T-cell (primary cell): ENCODE measurements at regions of chr7 and their contacts with region 1.

Region 1: GRCh38 chr7:76216381-76217082 is 14.8 kb downstream of the SRRM3 start:
- DNase-seq: no peak
- ATAC-seq: no peak
- H3K4me3 ChIP-seq: no peak overlapping the region
- H3K4me3 Mint-ChIP-seq: no peak overlapping the region
- H3K27ac ChIP-seq: no peak overlapping the region
- H3K27ac Mint-ChIP-seq: no peak overlapping the region
- H3K4me1 ChIP-seq: no peaks in the 10 kb centered on the region
- H3K4me1 Mint-ChIP-seq: no peaks in the 10 kb centered on the region
- H3K27me3 ChIP-seq: peaks cover 2 to 56% of the 10 kb centered on the region in 2 experiments
- H3K27me3 Mint-ChIP-seq: peaks cover 20 to 28% of the 10 kb centered on the region in 2 donors

Region 2: DNA sequence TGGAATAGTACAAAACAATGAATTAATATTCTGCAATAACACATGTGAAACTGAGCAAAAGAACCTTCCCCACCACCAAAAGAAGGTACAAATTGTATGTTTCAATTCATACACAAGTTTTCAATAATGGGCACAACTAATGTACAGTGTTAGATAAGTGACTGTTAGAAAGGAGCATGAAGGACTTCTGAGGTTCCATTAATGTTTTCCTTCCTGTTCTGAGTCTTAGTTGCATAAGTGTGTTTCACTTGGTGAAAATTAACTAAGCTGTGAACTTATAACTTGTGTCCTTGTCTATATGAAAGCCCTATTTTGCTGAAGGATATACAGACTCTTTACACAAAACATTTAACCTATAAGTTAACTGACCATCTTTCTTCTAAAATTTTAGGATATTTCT is 1191.4 kb after region 1 on chr7:
- CTCF ChIA-PET with region 1: interaction called in 1 of 2 experiments, 14 read pairs
- POLR2A ChIA-PET with region 1: no interaction called
- DNase-seq: no peak
- ATAC-seq: no peak
- H3K4me3 ChIP-seq: no peak overlapping the region
- H3K4me3 Mint-ChIP-seq: no peak overlapping the region
- H3K27ac ChIP-seq: no peak overlapping the region
- H3K27ac Mint-ChIP-seq: no peak overlapping the region
- H3K4me1 ChIP-seq: no peaks in the 10 kb centered on the region
- H3K4me1 Mint-ChIP-seq: peaks cover 8 to 28% (median 23%) of the 10 kb centered on the region in 3 donors
- H3K27me3 ChIP-seq: no peaks in the 10 kb centered on the region
- H3K27me3 Mint-ChIP-seq: no peaks in the 10 kb centered on the region